ENCODE measurements at regions of chr19 and their contacts with region 1.

Region 1: GRCh38 chr19:12789904-12790619 is 1.2 kb upstream of the JUNB start:
- DNase-seq: peak; percentile 99
- H3K4me3 Mint-ChIP-seq: peak overlapping the region; percentile 96
- H3K27ac Mint-ChIP-seq: peak overlapping the region; percentile 97
- H3K4me1 Mint-ChIP-seq: peaks cover 30% of the 10 kb centered on the region
- H3K27me3 Mint-ChIP-seq: no peaks in the 10 kb centered on the region

Region 2: GRCh38 chr19:12777217-12778016 is 12.6 kb before region 1 on chr19:
- intact Hi-C with region 1: loop called (anchors 1 kb)
- DNase-seq: peak; percentile 96
- H3K4me3 Mint-ChIP-seq: peak overlapping the region; percentile 96
- H3K27ac Mint-ChIP-seq: peak overlapping the region; percentile 92
- H3K4me1 Mint-ChIP-seq: peaks cover 37% of the 10 kb centered on the region
- H3K27me3 Mint-ChIP-seq: no peaks in the 10 kb centered on the region

Region 3: DNA sequence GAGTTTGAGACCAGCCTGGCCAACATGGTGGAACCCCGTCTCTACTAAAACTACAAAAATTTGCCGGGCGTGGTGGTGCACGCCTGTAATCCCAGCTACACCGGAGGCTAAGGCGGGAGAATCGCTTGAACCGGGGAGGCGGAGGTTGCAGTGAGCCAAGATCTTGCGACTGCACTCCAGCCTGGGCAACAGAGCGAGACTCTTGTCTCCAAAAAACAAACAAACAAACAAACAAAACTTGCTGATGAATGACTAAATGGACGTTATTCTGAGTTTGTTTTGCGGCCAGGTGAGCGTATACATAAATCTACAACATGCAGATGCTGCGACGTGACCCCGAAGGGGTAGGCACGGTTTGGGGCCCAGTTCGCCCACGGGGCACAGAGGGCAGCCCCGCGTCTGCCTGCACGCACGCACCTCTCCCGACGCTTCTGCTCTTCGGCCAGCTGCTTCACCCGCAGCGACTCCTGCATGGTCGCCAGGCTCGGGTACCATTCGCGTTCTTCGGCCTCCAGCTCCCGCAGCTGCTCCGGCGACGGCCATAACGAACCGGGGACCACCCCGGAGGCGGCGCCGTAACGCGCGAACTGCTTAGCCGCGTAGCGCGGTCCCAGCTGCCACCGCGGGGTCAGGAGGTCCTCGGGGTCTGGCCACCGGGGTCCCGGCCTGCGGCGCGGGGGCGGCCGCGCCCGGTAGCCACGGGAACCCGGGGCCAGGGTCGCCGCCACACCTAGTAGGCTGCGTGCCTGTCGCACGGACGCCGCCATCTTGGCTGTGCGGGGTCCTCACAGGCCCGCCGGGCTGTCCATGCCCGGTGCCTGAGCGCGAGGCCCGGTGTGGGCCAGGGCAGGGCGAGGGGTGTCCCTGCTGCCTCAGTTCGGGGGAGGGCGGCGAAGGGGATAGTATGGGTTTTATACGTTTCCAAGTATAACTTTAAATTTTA is 166.7 kb after region 1 on chr19 and contains the start of gene GADD45GIP1:
- intact Hi-C with region 1: no loop called
- DNase-seq: peak; percentile 96
- H3K4me3 Mint-ChIP-seq: peak within 1 kb of the TSS; percentile 75
- H3K27ac Mint-ChIP-seq: peak within 1 kb of the TSS; percentile 95
- H3K4me1 Mint-ChIP-seq: peaks cover 25% of the 10 kb centered on the region
- H3K27me3 Mint-ChIP-seq: peaks cover 1% of the 10 kb centered on the region
- total RNA-seq, gene GADD45GIP1: 32.4 and 34.4 TPM in 2 replicates

Region 4: DNA sequence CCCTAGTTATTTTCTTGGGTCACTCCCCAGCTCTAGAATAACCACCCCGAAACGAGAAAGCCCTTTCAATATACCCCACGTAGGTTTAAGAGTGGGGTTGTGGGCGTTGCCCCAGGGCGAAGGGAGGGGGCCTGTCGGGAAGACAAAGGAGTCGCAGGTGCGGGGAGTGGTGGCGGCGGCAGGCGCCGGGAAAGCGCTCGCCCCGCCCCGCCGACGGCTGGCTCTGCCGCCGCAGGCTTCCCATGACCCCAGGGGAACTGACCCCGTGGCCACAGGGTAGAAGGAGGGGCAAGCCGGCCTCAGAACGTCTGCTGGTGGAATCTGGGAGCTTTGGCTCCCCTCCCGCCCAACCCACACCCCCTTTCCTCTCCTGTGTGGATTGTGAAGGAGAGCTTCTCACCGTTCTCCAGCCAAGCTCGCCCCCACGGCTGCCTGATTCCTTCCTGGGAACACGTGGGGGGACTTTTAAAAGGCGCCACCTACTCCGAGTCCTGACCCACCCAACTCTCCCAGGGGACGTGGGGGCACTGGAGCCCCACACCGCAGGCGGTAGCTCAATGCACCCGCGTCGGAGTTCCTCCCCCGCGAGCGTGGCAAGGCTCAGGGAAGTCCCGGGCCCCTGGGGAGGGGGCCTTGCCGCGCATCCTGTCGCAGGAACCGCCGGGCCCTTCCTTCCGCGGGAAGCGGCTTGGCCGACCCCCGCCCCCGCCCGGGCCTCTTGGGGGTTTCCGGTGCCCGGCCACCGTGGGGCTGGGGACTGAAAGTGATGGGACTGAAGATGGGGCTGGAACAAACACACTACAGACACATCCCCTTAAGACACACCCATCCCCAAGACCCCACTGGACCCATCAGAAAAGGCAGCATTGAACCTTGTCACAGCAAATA is 365.7 kb after region 1 on chr19:
- intact Hi-C with region 1: loop called (anchors 2 kb)
- DNase-seq: peak; percentile 95
- H3K4me3 Mint-ChIP-seq: peak overlapping the region; percentile 100
- H3K27ac Mint-ChIP-seq: peak overlapping the region; percentile 99
- H3K4me1 Mint-ChIP-seq: peaks cover 44% of the 10 kb centered on the region
- H3K27me3 Mint-ChIP-seq: peaks cover 2% of the 10 kb centered on the region